Dorsolateral prefrontal cortex (tissue), 120 donors: ENCODE measurements at regions of chr7 and their contacts with region 1.

Region 1: GRCh38 chr7:132919771-132920170 is 162.1 kb downstream of the CHCHD3 start:
- DNase-seq: no peak
- H3K4me3 ChIP-seq: no peak overlapping the region
- H3K27ac ChIP-seq: no peak overlapping the region
- H3K27me3 ChIP-seq: no peaks in the 10 kb centered on the region
- CTCF ChIP-seq: no peak

Region 2: DNA sequence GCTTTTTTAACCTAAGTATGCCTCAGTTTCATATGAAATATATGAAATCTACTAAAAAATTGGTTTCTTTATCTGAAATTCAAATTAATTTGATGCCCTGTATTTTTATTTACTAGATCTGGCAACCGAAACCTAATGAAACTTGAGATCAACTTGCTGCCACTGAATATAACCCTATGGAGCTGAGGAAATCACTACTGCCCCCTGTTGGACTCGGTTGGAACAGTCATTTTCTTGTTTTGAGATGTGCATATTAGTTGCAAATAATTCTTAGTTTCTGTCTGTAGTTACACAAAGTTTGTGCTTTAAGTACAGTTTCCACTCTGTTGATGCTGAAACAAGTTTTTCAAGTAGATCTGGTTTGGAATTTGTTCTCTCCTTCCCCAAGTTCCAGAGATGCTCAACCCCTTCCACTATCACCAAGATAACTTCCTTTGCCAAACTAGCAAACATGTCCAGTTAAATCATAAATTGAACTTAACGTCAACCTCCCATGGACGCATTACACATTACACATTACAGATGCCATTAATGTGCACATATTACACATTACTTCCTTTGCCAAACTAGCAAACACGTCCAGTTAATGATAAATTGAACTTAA is 310.9 kb after region 1 on chr7:
- intact Hi-C with region 1: loop called in 1 of 2 experiments (anchors 10 kb)
- DNase-seq: peak in 4 of 10 donors; percentile 14 to 75 (median 41)
- H3K4me3 ChIP-seq: no peak overlapping the region
- H3K27ac ChIP-seq: no peak overlapping the region
- H3K27me3 ChIP-seq: no peaks in the 10 kb centered on the region
- CTCF ChIP-seq: peak; percentile 47 to 90 (median 76)